ENCODE measurements at regions of chr1 and their contacts with region 1.

Region 1: GRCh38 chr1:151661751-151662150 is 49.9 kb downstream of the SNX27 start:
- DNase-seq: no peak
- ATAC-seq: no peak
- H3K4me3 ChIP-seq: no peak overlapping the region
- H3K27ac ChIP-seq: no peak overlapping the region
- H3K4me1 ChIP-seq: no peaks in the 10 kb centered on the region
- H3K27me3 ChIP-seq: no peaks in the 10 kb centered on the region

Region 2: DNA sequence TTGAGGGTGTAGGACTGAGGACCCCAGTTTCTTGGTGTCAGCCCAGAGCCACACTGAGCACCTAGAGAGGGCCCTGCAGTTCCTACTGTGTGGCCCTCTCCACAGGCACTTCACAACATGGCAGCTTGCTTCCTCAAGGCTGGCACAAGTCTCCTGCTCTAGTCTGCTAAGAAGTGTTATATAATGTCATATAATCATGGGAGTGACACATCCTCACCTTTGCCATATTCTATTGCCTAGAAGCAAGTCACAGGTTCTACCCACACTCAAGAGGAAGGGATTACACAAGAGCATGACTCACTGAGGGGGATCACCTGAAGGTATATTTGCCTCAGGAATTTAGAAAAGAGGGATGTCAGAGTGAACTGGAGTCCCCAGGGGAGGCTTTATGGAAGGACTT is 55.4 kb before region 1 on chr1:
- intact Hi-C with region 1: loop called in 1 of 4 experiments (anchors 10 kb)
- DNase-seq: no peak
- ATAC-seq: no peak
- H3K4me3 ChIP-seq: no peak overlapping the region
- H3K27ac ChIP-seq: no peak overlapping the region
- H3K4me1 ChIP-seq: no peaks in the 10 kb centered on the region
- H3K27me3 ChIP-seq: no peaks in the 10 kb centered on the region

Measured in right cardiac atrium (tissue), 5 donors.